ENCODE measurements at regions of chr11 and their contacts with region 1.

Region 1: GRCh38 chr11:96464700-96465307 is 75.0 kb downstream of the JRKL start:
- DNase-seq: peak; percentile 70 to 72
- ATAC-seq: peak; percentile 91 to 95
- H3K4me3 ChIP-seq: no peak overlapping the region
- H3K27ac ChIP-seq: no peak overlapping the region
- H3K4me1 ChIP-seq: no peaks in the 10 kb centered on the region
- CTCF ChIP-seq: peak; percentile 57; the same call in 2 of the 3 replicates
- EP300 ChIP-seq: no peak
- POLR2A ChIP-seq: no peak
- RAD21 ChIP-seq: peak; percentile 74 to 77

Region 2: GRCh38 chr11:96342961-96343711 is 121.7 kb before region 1 on chr11 and contains the start of gene MAML2:
- CTCF ChIA-PET with region 1: no interaction called
- POLR2A ChIA-PET with region 1: no interaction called
- DNase-seq: peak; percentile 86 to 94
- ATAC-seq: peak; percentile 99
- H3K4me3 ChIP-seq: peak within 1 kb of the TSS; percentile 74
- H3K27ac ChIP-seq: peak within 1 kb of the TSS; percentile 83 to 85
- H3K4me1 ChIP-seq: peaks cover 24% of the 10 kb centered on the region
- CTCF ChIP-seq: peak; percentile 78
- EP300 ChIP-seq: no peak
- POLR2A ChIP-seq: no peak
- RAD21 ChIP-seq: peak; percentile 84 to 97
- polyA plus RNA-seq, gene MAML2: 2.5 and 3.2 TPM in 2 replicates

Region 3: DNA sequence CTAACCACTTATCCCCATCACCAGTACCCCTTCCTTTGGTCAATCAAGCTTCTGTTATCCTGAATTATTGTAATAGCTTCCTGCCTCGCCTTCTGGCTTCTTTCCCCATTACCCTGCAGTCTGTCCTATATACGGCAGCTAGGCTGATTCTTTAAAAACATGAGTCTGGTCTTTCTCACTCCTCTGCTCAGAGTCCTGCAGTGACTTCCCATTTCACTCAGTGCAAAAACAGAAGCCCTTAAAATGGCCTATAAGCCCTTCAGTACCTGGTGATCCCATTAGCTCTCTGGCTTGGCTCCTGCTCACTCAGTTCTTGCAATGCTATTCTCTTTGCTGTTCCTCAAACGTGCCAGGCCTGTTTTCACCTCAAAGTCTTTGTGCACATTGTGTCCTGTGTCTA is 16.6 kb before region 1 on chr11:
- CTCF ChIA-PET with region 1: interaction called, 15 read pairs
- POLR2A ChIA-PET with region 1: no interaction called
- DNase-seq: no peak
- ATAC-seq: no peak
- H3K4me3 ChIP-seq: no peak overlapping the region
- H3K27ac ChIP-seq: no peak overlapping the region
- H3K4me1 ChIP-seq: no peaks in the 10 kb centered on the region
- CTCF ChIP-seq: no peak
- EP300 ChIP-seq: no peak
- POLR2A ChIP-seq: no peak
- RAD21 ChIP-seq: no peak

Region 4: DNA sequence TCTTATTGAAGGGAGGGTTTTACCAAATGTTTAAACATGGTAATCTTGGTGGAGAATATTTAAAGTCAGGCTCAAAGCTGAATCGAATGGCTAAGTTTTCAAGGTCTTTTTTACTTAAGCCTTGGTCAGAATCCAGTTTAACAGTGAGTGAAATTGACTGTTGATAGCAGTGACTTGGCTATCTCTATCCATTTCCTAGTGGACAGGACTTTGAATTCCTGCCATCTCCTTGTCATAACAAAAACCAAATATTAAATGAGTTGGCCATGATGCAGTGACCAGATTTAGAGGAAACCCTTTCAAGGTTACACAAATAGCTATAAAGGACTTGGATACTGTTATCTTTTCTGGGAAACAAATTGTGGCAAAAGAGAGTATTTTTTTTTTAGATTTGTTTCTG is 17.0 kb after region 1 on chr11:
- CTCF ChIA-PET with region 1: interaction called, 26 read pairs
- POLR2A ChIA-PET with region 1: no interaction called
- DNase-seq: no peak
- ATAC-seq: no peak
- H3K4me3 ChIP-seq: no peak overlapping the region
- H3K27ac ChIP-seq: no peak overlapping the region
- H3K4me1 ChIP-seq: no peaks in the 10 kb centered on the region
- CTCF ChIP-seq: no peak
- EP300 ChIP-seq: no peak
- POLR2A ChIP-seq: no peak
- RAD21 ChIP-seq: no peak